SK-N-SH (cell line): ENCODE measurements at regions of chr15 and their contacts with region 1.

Region 1: GRCh38 chr15:73873889-73874511 is 636 bp downstream of the TBC1D21 start:
- DNase-seq: peak; percentile 55
- H3K4me3 ChIP-seq: no peak overlapping the region; a peak in 1 of 4 replicates
- H3K27ac ChIP-seq: no peak overlapping the region
- H3K4me1 ChIP-seq: no peaks in the 10 kb centered on the region
- H3K27me3 ChIP-seq: no peaks in the 10 kb centered on the region; the same call in 1 of the 2 replicates
- CTCF ChIP-seq: peak; percentile 71
- EP300 ChIP-seq: no peak
- RAD21 ChIP-seq: peak; percentile 79

Region 2: GRCh38 chr15:73683777-73684580 is 190.0 kb before region 1 on chr15 and contains the start of gene CD276:
- CTCF ChIA-PET with region 1: no interaction called
- POLR2A ChIA-PET with region 1: no interaction called
- DNase-seq: peak; percentile 91
- H3K4me3 ChIP-seq: peak within 1 kb of the TSS; percentile 82 to 89
- H3K27ac ChIP-seq: peak within 1 kb of the TSS; percentile 77 to 84
- H3K4me1 ChIP-seq: peaks cover 35 to 37% of the 10 kb centered on the region in 2 experiments; a peak in 3 of 4 replicates
- H3K27me3 ChIP-seq: no peaks in the 10 kb centered on the region
- CTCF ChIP-seq: no peak
- EP300 ChIP-seq: peak in 1 of 2 experiments; percentile 3; a peak in 1 of 4 replicates
- RAD21 ChIP-seq: peak; percentile 30; the same call in 1 of the 2 replicates
- polyA plus RNA-seq, gene CD276: 60.1 and 86.2 TPM in 2 replicates

Region 3: DNA sequence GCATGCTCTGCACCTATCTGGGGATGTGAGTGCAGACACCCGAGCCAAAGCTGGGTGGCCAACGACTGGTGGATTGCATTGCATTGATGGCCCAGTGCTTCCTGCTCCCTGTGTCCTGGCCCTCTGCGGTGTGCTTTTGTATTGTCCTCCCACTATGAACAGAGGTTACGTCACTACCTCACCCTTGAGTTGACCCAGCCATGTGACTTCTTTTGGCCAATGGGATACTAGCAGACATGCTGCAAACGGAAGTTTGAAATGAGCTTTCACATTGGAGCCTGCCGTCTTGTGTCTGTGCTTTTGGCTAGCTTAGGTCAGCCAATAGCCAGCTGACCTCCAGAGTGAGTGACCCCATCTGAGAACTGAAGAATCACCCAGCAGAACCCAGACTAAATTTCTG is 15.9 kb before region 1 on chr15:
- CTCF ChIA-PET with region 1: interaction called, 18 read pairs
- POLR2A ChIA-PET with region 1: no interaction called
- DNase-seq: no peak
- H3K4me3 ChIP-seq: no peak overlapping the region
- H3K27ac ChIP-seq: no peak overlapping the region
- H3K4me1 ChIP-seq: peaks cover 0 to 3% of the 10 kb centered on the region in 2 experiments; a peak in 1 of 4 replicates
- H3K27me3 ChIP-seq: peaks cover 13% of the 10 kb centered on the region; the same call in 1 of the 2 replicates
- CTCF ChIP-seq: no peak
- EP300 ChIP-seq: no peak
- RAD21 ChIP-seq: no peak

Region 4: DNA sequence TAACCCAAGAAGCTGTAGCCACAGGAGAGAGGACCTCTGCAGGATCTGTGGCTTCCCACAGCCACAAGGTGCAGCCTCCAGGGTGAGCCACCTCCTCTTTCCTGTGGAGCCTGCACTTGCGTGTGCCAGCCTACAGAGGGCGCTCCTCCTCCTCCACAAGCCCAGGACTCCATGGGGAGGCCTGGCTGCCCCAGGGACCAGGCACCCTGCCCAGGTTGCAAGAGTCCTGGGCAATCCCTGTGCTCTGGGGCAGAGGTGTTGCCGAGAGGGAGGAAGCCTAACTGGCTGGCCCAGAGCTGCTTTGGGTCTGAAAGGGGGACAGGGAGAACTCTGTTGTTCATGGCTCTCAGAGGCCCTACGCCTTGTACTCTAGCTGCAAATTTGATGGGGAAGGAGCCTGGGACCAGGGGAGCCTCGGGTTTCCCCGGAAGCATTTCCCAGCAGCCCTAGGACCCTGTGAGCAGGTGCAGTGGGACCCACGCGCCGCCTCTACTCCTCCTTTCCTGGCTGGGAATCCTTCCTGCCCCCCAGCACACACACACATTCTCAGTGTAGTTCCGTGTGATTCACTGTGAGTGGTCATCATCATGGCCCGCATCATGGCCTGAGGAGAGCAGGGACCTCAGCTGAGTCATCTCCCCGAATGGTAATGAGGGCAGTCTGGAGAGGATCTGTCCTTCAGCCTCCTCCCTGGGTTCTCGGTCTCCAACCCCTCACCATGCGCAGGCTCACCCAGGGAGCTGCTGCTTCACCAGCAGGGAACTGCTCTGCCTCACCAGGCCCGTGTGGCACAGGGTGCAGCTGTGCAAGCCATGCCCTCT is 23.7 kb after region 1 on chr15:
- CTCF ChIA-PET with region 1: interaction called, 148 read pairs
- POLR2A ChIA-PET with region 1: no interaction called
- DNase-seq: peak; percentile 81
- H3K4me3 ChIP-seq: no peak overlapping the region
- H3K27ac ChIP-seq: peak overlapping the region; percentile 12 to 80; a peak in 3 of 4 replicates
- H3K4me1 ChIP-seq: peaks cover 19 to 28% of the 10 kb centered on the region in 2 experiments; a peak in 3 of 4 replicates
- H3K27me3 ChIP-seq: no peaks in the 10 kb centered on the region
- CTCF ChIP-seq: peak; percentile 96
- EP300 ChIP-seq: no peak; a peak in 1 of 4 replicates
- RAD21 ChIP-seq: peak; percentile 63

Region 5: GRCh38 chr15:73936181-73936580 is 62.2 kb after region 1 on chr15:
- CTCF ChIA-PET with region 1: interaction called, 10 read pairs
- POLR2A ChIA-PET with region 1: no interaction called
- DNase-seq: peak; percentile 70
- H3K4me3 ChIP-seq: no peak overlapping the region
- H3K27ac ChIP-seq: peak overlapping the region in 1 of 2 experiments; percentile 64; a peak in 2 of 4 replicates
- H3K4me1 ChIP-seq: peaks cover 53 to 67% of the 10 kb centered on the region in 2 experiments
- H3K27me3 ChIP-seq: no peaks in the 10 kb centered on the region
- CTCF ChIP-seq: peak; percentile 24; the same call in 1 of the 2 replicates
- EP300 ChIP-seq: no peak
- RAD21 ChIP-seq: peak; percentile 36